Prostate gland (tissue), 2 donors: ENCODE measurements at regions of chr19 and their contacts with region 1.

Region 1: DNA sequence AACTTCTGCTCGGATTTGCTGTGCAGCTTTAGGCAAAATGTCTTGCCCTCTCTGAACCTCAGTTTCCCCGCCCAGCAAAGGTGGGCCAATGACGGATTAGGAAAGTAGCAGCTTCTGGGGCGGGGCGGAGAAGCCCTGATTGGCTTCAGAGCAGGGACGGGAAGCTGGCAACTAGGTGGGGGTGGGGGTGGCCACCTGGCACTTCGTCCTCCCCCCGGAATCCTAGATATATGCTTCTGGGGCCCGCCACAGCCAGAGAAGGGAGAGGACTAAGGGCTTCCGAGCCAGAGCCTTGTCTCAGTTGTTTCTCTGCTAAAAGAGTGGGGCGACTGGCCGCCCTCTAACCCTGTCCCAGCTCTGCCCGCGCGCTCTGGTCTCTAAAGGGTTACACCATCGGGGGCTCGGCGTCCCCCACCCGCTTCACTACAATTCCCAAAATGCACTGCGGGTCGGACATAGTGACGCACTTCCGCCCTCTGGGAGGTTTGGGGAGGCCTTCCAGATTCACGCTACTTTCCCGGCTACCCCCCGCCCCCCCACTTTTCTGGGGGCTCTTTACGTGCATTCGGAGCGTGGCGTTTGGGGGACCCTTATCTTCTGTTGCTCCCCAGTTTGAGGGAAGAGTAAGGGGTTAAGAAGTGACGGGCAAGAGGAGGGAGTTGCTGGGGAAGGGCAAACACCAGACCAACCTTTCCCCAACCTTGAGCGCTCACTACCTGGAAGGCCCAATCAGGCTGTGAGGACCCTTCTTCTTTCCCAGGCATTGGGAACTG is 672 bp upstream of the IRF2BP1 start:
- DNase-seq: peak; percentile 88
- H3K4me3 ChIP-seq: peak overlapping the region; percentile 82 to 84
- H3K27ac ChIP-seq: peak overlapping the region; percentile 60 to 92
- H3K4me1 ChIP-seq: peaks cover 24% of the 10 kb centered on the region
- H3K27me3 ChIP-seq: no peaks in the 10 kb centered on the region
- CTCF ChIP-seq: no peak
- POLR2A ChIP-seq: no peak

Region 2: GRCh38 chr19:45569619-45570421 is 316.8 kb before region 1 on chr19:
- intact Hi-C with region 1: no loop called
- DNase-seq: peak; percentile 24
- H3K4me3 ChIP-seq: no peak overlapping the region
- H3K27ac ChIP-seq: no peak overlapping the region
- H3K4me1 ChIP-seq: peaks cover 3% of the 10 kb centered on the region
- H3K27me3 ChIP-seq: no peaks in the 10 kb centered on the region
- CTCF ChIP-seq: peak in 3 of 4 experiments; percentile 38 to 60 (median 53)
- POLR2A ChIP-seq: no peak

Region 3: GRCh38 chr19:45817010-45817724 is 69.4 kb before region 1 on chr19:
- intact Hi-C with region 1: loop called (anchors 5 kb)
- DNase-seq: peak; percentile 89
- H3K4me3 ChIP-seq: no peak overlapping the region
- H3K27ac ChIP-seq: no peak overlapping the region
- H3K4me1 ChIP-seq: no peaks in the 10 kb centered on the region
- H3K27me3 ChIP-seq: no peaks in the 10 kb centered on the region
- CTCF ChIP-seq: peak; percentile 91 to 97 (median 94)
- POLR2A ChIP-seq: no peak

Region 4: DNA sequence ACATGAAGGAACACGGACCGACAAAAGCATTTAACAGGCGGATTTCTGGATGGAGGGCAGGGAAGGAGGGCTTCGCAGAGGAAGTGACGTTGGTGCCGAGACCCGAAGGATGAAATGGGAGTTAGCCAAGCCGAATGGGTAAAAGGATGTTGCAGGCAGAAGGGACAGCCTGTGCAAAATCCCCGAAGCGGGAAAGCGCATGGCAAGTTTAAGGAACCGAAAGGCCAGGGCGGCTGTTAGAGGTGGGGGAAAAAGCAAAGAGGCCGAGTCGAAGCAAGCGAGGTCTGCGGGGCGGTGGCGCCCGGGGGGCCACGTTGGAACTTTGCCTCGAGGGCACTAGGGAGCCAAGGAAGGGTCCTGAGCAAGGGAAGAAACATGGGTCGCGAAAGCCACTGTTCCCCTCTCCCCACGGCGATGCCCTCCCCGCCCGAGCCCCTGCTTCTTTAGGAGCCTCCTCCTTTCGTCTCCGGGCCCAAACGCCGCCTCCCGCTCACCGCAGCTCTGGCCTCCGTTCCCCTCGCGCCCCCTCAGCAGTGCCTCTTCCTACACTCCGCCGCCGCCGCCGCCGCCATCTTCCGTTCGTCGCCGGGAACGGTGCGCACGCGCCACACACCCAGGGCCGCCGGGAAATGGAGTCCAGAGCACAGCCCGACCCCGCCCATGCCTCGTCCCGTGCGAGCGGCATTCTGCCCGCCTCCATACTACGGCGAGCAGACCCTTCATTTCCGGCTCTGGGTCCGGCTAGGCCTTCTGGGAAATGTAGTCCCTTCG is 23.9 kb before region 1 on chr19 and contains the start of gene SYMPK:
- intact Hi-C with region 1: loop called (anchors 2 kb)
- DNase-seq: peak; percentile 98
- H3K4me3 ChIP-seq: peak within 1 kb of the TSS; percentile 89 to 90
- H3K27ac ChIP-seq: peak within 1 kb of the TSS; percentile 91 to 94
- H3K4me1 ChIP-seq: peaks cover 3% of the 10 kb centered on the region
- H3K27me3 ChIP-seq: no peaks in the 10 kb centered on the region
- CTCF ChIP-seq: peak in 3 of 4 experiments; percentile 13 to 32 (median 31)
- POLR2A ChIP-seq: peak; percentile 79
- total RNA-seq, gene SYMPK: 76.4 to 104 TPM

Region 5: DNA sequence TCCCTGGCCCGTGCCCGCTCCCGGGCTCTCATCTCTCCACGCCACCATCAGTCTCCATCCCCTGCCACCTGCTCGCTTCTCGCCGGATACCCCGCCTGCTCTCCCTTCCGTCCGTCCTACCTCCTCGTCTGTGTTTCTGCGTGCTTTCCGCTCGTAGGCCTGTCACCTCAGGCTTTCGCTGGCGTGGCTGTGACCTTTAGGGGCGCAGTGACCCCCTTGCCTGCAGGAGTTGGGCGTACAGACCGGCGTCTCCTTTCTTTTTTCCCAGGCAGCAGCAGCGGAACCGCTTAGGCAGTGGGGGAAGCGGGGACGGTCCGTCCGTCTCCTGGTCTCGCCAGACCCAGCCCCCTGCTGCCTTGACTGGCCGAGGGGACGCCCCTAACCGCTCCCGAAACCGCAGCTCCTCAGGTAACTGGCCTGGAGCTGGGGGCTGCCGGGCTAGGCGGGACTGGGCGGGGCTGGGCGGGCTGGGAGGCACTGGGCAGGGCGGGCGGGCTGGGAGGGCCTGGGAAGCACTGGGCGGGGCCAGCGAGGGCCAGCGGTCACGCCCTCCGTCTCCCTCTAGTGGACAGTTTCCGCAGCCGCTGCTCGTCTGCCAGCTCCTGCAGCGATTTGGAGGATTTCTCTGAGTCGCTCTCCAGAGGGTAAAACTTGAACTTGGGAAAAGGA is 129.9 kb after region 1 on chr19:
- intact Hi-C with region 1: loop called (anchors 10 kb)
- DNase-seq: peak; percentile 69
- H3K4me3 ChIP-seq: peak overlapping the region; percentile 34 to 50
- H3K27ac ChIP-seq: no peak overlapping the region
- H3K4me1 ChIP-seq: peaks cover 10% of the 10 kb centered on the region
- H3K27me3 ChIP-seq: no peaks in the 10 kb centered on the region
- CTCF ChIP-seq: peak; percentile 65 to 82 (median 74)
- POLR2A ChIP-seq: no peak